AG04450 (cell line): ENCODE measurements at regions of chr20 and their contacts with region 1.

Region 1: DNA sequence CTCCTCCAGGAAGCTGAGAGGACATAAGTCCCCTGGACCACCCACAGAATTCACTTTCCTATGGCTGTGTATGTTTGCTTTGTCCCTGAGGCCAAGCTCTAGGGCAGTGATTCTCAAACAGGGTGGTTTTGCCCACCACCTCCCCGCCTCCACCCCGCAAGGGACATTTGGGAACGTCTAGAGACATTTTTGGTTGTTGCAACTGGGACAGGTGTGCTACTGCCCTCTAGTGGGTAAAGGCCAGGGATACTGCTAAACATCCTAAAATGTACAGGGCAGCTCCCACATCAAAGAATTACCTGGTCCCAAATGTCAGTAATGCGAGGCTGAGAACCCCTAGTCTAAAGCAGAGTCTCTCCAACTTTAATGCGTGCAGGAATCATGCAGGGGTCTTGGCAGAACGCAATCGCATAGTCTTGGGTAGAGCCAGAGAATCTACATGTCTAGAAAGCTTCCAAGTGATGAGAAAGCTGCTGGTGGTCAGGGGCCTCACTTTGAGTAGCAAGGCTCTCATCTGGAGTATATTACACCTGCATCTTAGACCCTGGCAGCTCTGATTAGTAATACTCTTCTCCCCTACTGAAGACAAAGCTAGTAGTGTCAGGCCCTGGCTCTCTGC is 5.1 kb downstream of the KCNS1 start:
- DNase-seq: no peak
- H3K4me3 ChIP-seq: no peak overlapping the region
- H3K27ac ChIP-seq: no peak overlapping the region
- H3K27me3 ChIP-seq: peaks cover 30% of the 10 kb centered on the region
- CTCF ChIP-seq: peak; percentile 83

Region 2: GRCh38 chr20:44642203-44643153 is 453.4 kb before region 1 on chr20:
- CTCF ChIA-PET with region 1: no interaction called
- POLR2A ChIA-PET with region 1: no interaction called
- DNase-seq: peak; percentile 58
- H3K4me3 ChIP-seq: no peak overlapping the region
- H3K27ac ChIP-seq: peak overlapping the region; percentile 65
- H3K27me3 ChIP-seq: no peaks in the 10 kb centered on the region
- CTCF ChIP-seq: no peak

Region 3: DNA sequence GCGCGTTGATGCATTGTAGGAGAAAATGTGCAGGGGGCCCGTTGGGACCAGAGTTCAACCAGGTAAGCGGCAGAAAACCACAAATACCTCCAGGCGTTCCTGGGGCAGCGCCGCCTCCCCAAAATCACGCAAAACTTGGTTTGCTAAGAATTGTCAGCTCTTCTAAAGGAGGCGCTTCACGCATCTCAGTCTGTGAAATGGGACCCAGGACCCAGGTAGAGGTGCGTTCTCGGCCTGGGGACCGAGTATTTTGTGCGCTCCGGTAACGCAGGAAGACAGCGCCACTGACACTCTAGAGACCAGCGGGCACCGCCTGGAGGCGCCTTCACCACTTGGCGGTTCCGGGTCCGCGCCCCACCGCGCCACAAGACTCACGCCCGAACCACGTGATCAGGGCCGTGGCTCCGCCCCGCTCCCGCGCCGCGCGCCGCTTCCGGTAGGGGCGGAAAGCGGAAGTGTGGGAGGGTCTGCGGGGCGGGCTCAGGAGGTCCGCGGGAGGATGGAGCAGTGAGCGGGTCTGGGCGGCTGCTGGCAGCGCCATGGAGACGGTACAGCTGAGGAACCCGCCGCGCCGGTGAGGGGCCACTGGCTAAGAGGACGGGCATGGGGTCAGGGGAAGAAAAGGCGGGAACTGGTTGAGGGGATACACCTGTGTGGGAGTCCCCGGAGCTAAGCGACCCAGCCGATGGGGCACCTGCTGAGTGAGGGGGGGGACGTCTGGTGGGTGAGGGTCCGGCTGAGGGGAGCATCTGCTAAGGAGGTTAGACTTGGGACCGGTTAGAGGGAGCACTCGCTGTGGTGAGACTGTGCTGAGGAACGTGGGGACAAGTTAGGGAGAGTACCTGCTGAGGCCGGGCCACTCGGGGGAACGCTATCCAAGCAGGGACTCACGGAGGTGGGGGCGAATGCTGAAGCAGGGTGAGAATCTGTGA is 129.6 kb before region 1 on chr20 and contains the start of gene STK4:
- CTCF ChIA-PET with region 1: interaction called, 11 read pairs
- POLR2A ChIA-PET with region 1: no interaction called
- DNase-seq: peak; percentile 53
- H3K4me3 ChIP-seq: peak within 1 kb of the TSS; percentile 95
- H3K27ac ChIP-seq: no peak within 1 kb of the TSS
- H3K27me3 ChIP-seq: no peaks in the 10 kb centered on the region
- CTCF ChIP-seq: peak; percentile 50
- polyA plus RNA-seq, gene STK4: 18.9 and 25.1 TPM in 2 replicates

Region 4: DNA sequence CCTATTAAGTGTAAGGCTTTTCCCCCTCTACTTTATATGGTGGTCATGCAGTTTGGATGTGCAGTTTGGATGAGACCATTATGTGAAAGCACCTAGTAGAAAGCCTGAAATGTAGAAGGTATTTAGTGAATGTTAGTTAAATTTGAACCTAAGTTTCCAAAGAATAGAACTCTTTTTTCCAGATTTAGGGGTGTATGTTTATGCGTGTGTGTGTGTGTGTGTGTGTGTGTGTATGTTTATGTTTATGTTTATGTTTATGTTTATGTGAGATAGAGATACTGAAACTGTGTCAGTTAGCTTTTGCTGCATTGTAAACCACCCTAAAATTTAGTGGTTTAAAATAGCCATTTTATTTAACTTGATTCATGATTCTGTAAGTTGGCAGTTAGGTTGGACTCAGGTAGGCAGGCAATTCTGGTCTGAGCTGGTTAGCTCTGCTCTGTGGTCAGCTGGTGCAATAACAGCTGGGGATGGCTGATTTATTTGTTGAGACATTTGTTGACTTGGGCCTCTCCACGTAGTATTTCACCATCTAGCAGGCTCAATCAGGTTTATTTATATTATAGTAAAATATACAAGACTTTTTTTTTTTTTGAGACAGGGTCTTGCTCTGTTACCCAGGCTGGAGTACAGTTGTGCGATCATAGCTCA is 75.5 kb before region 1 on chr20:
- CTCF ChIA-PET with region 1: interaction called, 16 read pairs
- POLR2A ChIA-PET with region 1: interaction called, 4 read pairs
- DNase-seq: no peak
- H3K4me3 ChIP-seq: no peak overlapping the region
- H3K27ac ChIP-seq: no peak overlapping the region
- H3K27me3 ChIP-seq: no peaks in the 10 kb centered on the region
- CTCF ChIP-seq: no peak

Region 5: GRCh38 chr20:45052698-45053429 is 43.0 kb before region 1 on chr20:
- CTCF ChIA-PET with region 1: interaction called, 275 read pairs
- POLR2A ChIA-PET with region 1: no interaction called
- DNase-seq: no peak
- H3K4me3 ChIP-seq: no peak overlapping the region
- H3K27ac ChIP-seq: peak overlapping the region; percentile 11
- H3K27me3 ChIP-seq: no peaks in the 10 kb centered on the region
- CTCF ChIP-seq: no peak

Region 6: GRCh38 chr20:45111799-45112471 is 16.1 kb after region 1 on chr20:
- CTCF ChIA-PET with region 1: interaction called, 25 read pairs
- POLR2A ChIA-PET with region 1: no interaction called
- DNase-seq: no peak
- H3K4me3 ChIP-seq: no peak overlapping the region
- H3K27ac ChIP-seq: no peak overlapping the region
- H3K27me3 ChIP-seq: peaks cover 8% of the 10 kb centered on the region
- CTCF ChIP-seq: peak; percentile 51; the same call in 1 of the 2 replicates